Sciatic nerve (tissue), 2 donors: ENCODE measurements at regions of chrX and their contacts with region 1.

Region 1: GRCh38 chrX:153953342-153953830 is 8.9 kb upstream of the RENBP start:
- DNase-seq: peak; percentile 86
- ATAC-seq: peak; percentile 67

Region 2: DNA sequence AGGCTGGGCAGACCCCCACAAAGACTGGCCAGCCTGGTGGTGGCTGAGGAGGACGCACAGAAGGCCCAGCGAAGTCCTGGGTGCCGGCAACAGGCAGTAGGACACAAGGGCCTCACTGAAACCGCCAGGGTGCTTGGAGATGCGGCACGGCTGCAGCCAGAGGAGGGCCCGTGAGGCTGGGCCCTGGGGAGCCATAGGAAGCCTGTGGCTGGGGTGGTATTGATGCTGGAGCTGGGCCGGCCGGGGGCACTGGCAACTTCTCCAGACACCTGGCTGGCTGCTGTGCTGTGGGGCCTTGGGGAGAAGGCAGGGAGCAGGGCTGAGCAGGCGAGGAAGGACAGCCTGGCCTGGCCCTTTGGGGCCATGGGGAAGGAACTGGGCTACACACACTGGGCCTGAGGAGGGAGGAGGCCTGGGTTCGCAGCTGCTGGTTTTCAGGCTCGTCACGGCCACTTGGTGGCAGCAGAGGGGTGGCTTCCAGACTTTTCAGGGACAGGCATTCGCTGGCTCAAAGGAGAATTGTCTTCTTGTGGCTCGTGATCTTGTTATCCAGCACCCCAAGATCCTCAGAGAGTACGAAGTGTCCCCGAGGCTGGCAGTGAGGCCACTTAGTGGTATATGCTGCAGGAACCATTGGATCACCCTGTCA is 398.7 kb before region 1 on chrX:
- intact Hi-C with region 1: loop called (anchors 10 kb)
- DNase-seq: peak; percentile 85
- ATAC-seq: peak; percentile 70

Region 3: GRCh38 chrX:153766098-153766817 is 187.1 kb before region 1 on chrX:
- intact Hi-C with region 1: loop called (anchors 5 kb)
- DNase-seq: peak; percentile 61
- ATAC-seq: peak; percentile 26

Region 4: DNA sequence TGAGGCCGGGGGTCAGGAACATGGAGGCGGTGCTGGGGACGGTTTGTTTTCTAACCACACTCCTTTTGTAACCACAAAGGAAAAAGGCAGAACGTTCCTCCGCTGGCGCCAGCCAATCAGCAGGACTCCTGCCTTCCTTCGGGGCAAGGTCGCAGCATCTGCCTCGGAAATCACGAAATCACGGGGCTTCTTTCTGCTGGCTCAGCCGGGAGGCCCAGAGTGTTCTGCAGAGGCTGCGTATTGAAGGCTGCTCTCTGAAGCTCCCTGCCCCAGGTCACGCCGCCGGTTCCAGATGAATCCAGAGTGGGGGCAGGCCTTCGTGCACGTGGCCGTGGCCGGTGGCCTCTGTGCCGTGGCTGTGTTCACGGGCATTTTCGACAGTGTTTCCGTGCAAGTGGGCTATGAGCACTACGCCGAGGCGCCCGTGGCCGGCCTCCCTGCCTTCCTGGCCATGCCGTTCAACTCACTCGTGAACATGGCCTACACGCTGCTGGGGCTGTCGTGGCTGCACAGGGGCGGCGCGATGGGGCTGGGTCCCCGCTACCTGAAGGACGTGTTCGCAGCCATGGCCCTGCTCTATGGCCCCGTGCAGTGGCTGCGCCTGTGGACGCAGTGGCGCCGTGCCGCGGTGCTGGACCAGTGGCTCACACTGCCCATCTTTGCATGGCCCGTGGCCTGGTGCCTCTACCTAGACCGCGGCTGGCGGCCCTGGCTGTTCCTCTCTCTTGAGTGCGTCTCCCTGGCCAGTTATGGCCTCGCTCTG is 28.6 kb after region 1 on chrX:
- intact Hi-C with region 1: no loop called
- DNase-seq: peak; percentile 87
- ATAC-seq: peak; percentile 88